Panc1 (cell line): ENCODE measurements at regions of chr17 and their contacts with region 1.

Region 1: DNA sequence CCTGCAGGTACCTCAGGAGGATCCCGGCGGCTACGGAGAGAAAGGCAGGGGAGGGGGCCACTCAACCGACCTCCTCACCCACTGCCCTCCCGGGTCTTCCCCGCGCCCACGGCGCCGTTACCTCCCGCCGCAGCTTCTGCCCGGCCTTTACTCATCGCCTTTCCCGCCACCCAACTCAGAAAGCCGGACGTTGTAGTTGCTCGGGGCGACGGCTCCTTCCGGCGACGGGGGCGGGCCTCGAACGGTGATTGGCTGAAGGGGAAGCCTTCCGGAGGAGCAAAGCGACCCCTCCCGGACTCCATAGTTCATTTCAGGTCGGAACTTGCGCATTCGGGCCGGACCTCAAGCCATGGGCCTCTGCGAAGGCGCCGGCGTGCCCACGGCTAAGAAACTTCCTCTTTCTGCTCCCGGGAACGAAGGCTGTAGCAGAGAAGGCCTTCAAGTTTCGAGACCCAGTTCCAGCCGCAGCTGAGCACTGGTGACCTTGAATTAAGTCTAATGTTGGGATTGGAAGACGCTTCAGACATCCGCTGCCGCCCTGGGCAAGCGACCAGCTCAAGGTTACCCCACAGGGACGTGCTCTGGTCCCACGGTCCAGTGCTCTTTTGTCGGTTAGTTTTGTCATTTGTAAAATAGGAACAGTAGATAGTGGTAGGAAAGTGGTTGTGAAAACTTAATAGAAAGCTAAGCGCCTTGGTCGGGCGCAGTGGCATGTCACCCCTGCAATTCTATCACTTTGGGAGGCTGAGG is at the start of gene PSMC3IP:
- DNase-seq: peak; percentile 65
- ATAC-seq: peak; percentile 93
- H3K4me3 ChIP-seq: peak within 1 kb of the TSS; percentile 69 to 92
- H3K27ac ChIP-seq: peak within 1 kb of the TSS; percentile 91
- H3K4me1 ChIP-seq: peaks cover 15% of the 10 kb centered on the region
- H3K27me3 ChIP-seq: no peaks in the 10 kb centered on the region
- CTCF ChIP-seq: peak; percentile 0; the same call in 1 of the 2 replicates
- total RNA-seq, gene PSMC3IP: 19.2 TPM

Region 2: GRCh38 chr17:40699371-40699770 is 1878.3 kb before region 1 on chr17:
- CTCF ChIA-PET with region 1: interaction called, 10 read pairs
- POLR2A ChIA-PET with region 1: no interaction called
- in situ Hi-C with region 1: no loop called
- intact Hi-C with region 1: no loop called
- DNase-seq: no peak
- ATAC-seq: no peak
- H3K4me3 ChIP-seq: no peak overlapping the region
- H3K27ac ChIP-seq: no peak overlapping the region
- H3K4me1 ChIP-seq: no peaks in the 10 kb centered on the region
- H3K27me3 ChIP-seq: peaks cover 7% of the 10 kb centered on the region; the same call in 1 of the 2 replicates
- CTCF ChIP-seq: no peak

Region 3: DNA sequence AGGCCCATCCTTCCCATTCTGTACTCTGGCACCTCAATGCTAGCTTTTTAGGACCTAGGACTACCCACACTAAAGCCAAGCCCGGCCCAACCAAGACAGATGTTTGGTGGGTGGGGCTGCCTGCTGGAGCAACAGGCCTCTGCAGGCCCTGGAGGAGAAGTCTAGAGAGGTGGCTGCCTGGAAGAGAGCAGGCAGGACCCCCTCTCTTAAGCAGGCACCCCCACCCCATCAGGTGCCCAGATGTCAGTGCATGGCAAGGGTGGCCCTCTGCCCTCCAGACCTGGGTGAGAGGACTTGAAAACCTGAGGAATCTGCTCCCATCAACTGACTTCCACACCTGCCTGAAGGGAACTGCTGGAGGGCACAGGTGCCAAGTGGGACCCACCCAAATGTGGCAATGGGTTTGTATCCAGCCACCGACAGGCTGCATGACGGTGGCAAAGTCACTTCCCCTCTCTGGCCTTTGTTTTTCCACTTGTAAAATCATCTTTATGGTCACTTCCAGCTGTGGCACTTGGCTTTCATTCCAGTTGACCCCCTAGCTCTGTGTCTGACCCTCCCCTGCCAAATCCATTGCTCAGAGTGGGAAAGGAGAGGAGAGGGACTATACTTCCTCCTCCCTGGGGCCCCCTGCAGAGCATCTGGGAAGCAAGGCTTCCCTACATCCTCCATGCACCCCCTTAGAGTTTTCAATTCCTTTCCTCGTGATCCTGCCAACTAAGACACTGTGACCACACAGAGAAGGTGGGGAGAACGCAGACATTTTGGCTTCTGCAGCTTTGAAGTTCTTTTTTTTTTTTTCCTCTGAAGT is 291.1 kb before region 1 on chr17:
- CTCF ChIA-PET with region 1: no interaction called
- POLR2A ChIA-PET with region 1: interaction called, 13 read pairs
- in situ Hi-C with region 1: no loop called
- intact Hi-C with region 1: no loop called
- DNase-seq: no peak
- ATAC-seq: no peak
- H3K4me3 ChIP-seq: peak overlapping the region in 1 of 2 experiments; percentile 48; a peak in 2 of 4 replicates
- H3K27ac ChIP-seq: peak overlapping the region; percentile 93
- H3K4me1 ChIP-seq: peaks cover 32% of the 10 kb centered on the region
- H3K27me3 ChIP-seq: no peaks in the 10 kb centered on the region
- CTCF ChIP-seq: no peak

Region 4: GRCh38 chr17:42677008-42677857 is 99.5 kb after region 1 on chr17:
- CTCF ChIA-PET with region 1: interaction called, 9 read pairs
- POLR2A ChIA-PET with region 1: no interaction called
- in situ Hi-C with region 1: no loop called
- intact Hi-C with region 1: loop called (anchors 5 kb)
- DNase-seq: peak; percentile 93
- ATAC-seq: peak; percentile 82
- H3K4me3 ChIP-seq: peak overlapping the region; percentile 85 to 95
- H3K27ac ChIP-seq: peak overlapping the region; percentile 86
- H3K4me1 ChIP-seq: peaks cover 22% of the 10 kb centered on the region
- H3K27me3 ChIP-seq: no peaks in the 10 kb centered on the region
- CTCF ChIP-seq: no peak

Region 5: DNA sequence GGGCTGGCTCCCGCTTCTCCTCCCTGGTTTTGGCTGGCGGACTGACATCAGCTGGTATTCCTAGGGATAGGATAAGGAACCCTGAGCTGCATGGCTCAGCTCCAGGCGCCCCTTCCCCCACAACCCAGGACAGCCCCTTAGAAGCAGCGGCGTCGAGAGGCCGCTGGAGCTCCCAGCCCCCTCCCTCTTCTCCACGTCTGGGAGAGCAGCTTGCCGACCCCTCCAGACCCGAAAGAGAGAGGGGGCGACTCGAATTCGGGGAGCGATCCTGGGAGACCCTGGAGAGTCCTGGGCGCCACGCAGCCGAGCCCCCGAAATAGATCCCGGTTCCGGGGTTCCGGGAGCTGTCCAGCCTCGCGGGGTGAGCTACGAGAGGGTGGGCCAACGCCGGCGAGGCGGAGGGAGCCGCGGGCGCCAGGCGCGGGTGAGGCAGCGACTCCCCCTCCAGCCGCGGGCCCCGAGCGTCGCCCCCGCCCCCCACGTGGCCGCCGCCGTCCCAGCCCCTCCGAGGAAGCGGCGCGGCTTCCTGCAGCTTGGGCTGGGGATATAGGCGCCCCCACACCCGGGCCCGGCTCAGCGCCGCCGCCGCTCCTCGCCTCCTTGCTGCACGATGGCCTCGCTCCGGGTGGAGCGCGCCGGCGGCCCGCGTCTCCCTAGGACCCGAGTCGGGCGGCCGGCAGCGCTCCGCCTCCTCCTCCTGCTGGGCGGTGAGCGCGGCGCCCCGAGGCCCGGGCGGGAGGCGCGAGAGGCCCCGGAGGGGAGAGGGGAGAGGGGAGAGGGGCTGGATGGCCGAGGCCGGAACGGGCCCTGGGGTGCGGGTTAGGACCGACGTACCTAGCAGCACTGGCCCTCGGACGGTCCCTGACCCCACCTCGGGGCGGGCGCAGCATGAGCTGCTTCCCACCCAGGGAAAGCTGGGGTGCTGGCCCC is 183.2 kb after region 1 on chr17 and contains the start of gene RAMP2:
- CTCF ChIA-PET with region 1: interaction called, 14 read pairs
- POLR2A ChIA-PET with region 1: no interaction called
- in situ Hi-C with region 1: no loop called
- intact Hi-C with region 1: no loop called
- DNase-seq: no peak
- ATAC-seq: peak; percentile 58
- H3K4me3 ChIP-seq: peak within 1 kb of the TSS; percentile 26 to 28; a peak in 3 of 4 replicates
- H3K27ac ChIP-seq: no peak within 1 kb of the TSS
- H3K4me1 ChIP-seq: no peaks in the 10 kb centered on the region
- H3K27me3 ChIP-seq: no peaks in the 10 kb centered on the region
- CTCF ChIP-seq: no peak
- total RNA-seq, gene RAMP2: 1.1 TPM

Region 6: GRCh38 chr17:42906772-42907446 is 329.2 kb after region 1 on chr17:
- CTCF ChIA-PET with region 1: no interaction called
- POLR2A ChIA-PET with region 1: interaction called, 12 read pairs
- in situ Hi-C with region 1: no loop called
- intact Hi-C with region 1: no loop called
- DNase-seq: no peak
- ATAC-seq: no peak
- H3K4me3 ChIP-seq: no peak overlapping the region
- H3K27ac ChIP-seq: no peak overlapping the region
- H3K4me1 ChIP-seq: no peaks in the 10 kb centered on the region
- H3K27me3 ChIP-seq: no peaks in the 10 kb centered on the region
- CTCF ChIP-seq: no peak